ENCODE measurements at regions of chr11 and their contacts with region 1.

Region 1: GRCh38 chr11:120172054-120172911 is 34.4 kb upstream of the TRIM29 start:
- DNase-seq: peak; percentile 36
- ATAC-seq: peak; percentile 77
- H3K4me3 ChIP-seq: no peak overlapping the region
- H3K27ac ChIP-seq: no peak overlapping the region
- H3K4me1 ChIP-seq: peaks cover 2 to 14% of the 10 kb centered on the region in 2 experiments; a peak in 1 of 4 replicates
- H3K27me3 ChIP-seq: peaks cover 31% of the 10 kb centered on the region
- CTCF ChIP-seq: peak; percentile 76 to 90 (median 77)
- POLR2A ChIP-seq: no peak
- RAD21 ChIP-seq: peak; percentile 97

Region 2: DNA sequence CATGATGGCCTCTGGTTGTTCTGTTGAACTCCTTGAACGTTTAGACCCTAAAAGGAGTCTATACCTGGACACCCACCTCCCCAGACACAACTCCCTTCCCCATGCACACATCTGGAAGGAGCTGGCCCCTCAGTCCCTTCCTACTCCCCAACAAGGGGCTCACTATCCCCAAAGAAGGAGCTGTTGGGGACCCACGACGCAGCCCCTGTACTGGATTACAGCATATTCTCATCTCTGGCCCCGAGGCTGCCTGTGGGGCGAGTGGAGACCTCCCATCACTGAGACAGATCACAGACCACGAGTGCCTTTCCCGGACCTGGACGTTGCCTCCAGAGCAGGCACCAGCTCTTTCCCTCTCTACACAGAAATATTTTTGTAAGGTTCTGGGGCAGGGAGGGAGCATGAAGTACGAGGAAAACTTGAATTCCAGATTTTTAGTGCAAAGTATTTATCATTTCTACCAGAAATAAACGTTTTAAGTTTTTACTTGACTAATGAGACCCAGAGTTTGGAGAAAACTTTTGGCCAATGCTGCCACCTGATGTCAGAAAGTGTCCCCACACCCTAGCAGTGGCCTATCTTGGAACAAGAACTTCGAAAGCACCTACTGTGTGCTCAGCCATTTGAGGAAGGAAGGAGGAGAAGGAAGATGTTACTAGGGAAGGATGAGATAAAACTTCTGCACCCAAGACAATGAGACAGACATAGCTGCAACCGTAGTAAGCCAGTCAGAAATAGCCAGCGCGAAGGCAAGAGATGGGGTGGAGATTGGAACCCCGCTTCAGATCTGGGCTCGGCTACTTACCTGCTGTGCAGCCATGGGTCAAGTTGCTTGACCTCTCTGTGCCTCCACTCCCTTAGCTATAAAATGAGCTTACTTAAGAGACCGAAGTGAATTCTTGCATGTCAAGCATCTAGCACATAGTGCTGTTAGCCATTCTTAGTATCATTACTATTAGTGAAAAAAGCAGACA is 57.5 kb after region 1 on chr11:
- CTCF ChIA-PET with region 1: interaction called, 6 read pairs
- POLR2A ChIA-PET with region 1: no interaction called
- RAD21 ChIA-PET with region 1: no interaction called
- intact Hi-C with region 1: loop called (anchors 1 kb)
- DNase-seq: no peak
- ATAC-seq: peak; percentile 59; the same call in 1 of the 2 replicates
- H3K4me3 ChIP-seq: no peak overlapping the region
- H3K27ac ChIP-seq: no peak overlapping the region
- H3K4me1 ChIP-seq: no peaks in the 10 kb centered on the region
- H3K27me3 ChIP-seq: no peaks in the 10 kb centered on the region; the same call in 1 of the 2 replicates
- CTCF ChIP-seq: peak; percentile 68 to 78 (median 72)
- POLR2A ChIP-seq: no peak
- RAD21 ChIP-seq: peak; percentile 85

Region 3: GRCh38 chr11:120254788-120255518 is 82.7 kb after region 1 on chr11:
- CTCF ChIA-PET with region 1: no interaction called
- POLR2A ChIA-PET with region 1: no interaction called
- RAD21 ChIA-PET with region 1: no interaction called
- intact Hi-C with region 1: no loop called
- DNase-seq: no peak
- ATAC-seq: no peak; the same call in 1 of the 2 replicates
- H3K4me3 ChIP-seq: no peak overlapping the region
- H3K27ac ChIP-seq: no peak overlapping the region
- H3K4me1 ChIP-seq: no peaks in the 10 kb centered on the region; a peak in 1 of 4 replicates
- H3K27me3 ChIP-seq: peaks cover 46% of the 10 kb centered on the region; the same call in 1 of the 2 replicates
- CTCF ChIP-seq: no peak
- POLR2A ChIP-seq: no peak
- RAD21 ChIP-seq: no peak